ENCODE measurements at regions of chr19 and their contacts with region 1.

Region 1: DNA sequence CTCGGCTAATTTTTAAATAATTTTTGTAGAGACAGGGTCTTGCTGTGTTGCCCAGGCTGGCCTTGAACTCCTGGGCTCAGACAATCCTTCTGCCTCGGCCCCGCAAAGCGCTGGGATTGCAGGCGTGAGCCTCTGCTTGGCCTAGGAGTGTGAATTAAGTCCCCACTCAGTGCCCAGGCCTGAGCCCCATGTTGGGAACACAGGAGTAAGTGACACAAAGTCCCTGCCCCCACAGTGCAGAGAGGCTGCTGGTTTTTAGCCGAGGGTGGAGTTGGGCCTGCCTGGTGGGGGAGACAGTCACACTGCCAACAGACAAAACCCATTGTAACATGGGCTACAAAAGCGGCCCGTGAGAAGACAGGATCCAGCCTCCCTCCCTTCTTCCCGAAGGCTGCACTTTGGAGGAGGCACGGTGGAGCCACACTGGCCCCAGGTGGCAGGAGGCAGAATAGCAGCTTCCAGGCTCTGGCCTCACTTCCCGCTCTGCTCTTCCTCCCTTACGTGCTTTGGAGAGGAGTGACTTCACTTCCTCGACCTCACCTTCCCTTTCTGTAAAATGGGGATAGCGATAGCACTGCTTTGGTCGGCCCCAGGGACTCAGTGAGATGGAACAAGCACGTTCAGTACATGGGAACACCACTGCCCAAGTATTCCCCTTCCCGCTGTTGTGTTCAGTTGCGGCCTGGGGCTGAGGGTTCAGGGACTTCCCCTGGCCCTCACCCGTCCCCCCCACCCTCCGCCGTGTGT is 15.2 kb upstream of the EHD2 start:
- DNase-seq: peak; percentile 83
- ATAC-seq: peak; percentile 89

Region 2: GRCh38 chr19:47436712-47437401 is 261.2 kb before region 1 on chr19:
- intact Hi-C with region 1: loop called (anchors 2 kb)
- DNase-seq: peak; percentile 85
- ATAC-seq: peak; percentile 96

Region 3: DNA sequence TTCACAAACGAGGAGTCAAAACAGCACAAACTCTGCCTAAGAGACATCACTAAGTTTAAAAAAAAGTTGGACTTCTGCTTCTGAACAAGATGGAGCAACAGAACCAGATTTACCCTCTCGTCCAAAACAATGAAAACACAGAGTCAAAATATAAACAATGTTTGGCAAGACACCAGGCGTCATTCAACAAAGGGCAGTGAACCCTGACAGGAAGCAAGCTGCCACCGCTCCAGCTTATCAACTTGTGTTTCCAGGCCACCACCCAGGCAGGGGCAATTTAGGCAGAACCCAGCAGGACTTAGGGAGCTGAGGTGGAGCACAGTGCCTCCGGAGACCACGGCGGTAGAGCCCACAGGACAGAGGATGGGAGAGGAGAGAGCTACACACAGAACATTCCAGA is 174.6 kb before region 1 on chr19:
- intact Hi-C with region 1: loop called (anchors 5 kb)
- DNase-seq: no peak
- ATAC-seq: peak; percentile 63

Region 4: GRCh38 chr19:47608074-47608918 is 89.7 kb before region 1 on chr19:
- intact Hi-C with region 1: loop called (anchors 2 kb)
- DNase-seq: peak; percentile 96
- ATAC-seq: peak; percentile 94

Measured in Right ventricle myocardium superior (tissue), 1 donor.